Right ventricle myocardium inferior (tissue), 1 donor: ENCODE measurements at regions of chr5 and their contacts with region 1.

Region 1: DNA sequence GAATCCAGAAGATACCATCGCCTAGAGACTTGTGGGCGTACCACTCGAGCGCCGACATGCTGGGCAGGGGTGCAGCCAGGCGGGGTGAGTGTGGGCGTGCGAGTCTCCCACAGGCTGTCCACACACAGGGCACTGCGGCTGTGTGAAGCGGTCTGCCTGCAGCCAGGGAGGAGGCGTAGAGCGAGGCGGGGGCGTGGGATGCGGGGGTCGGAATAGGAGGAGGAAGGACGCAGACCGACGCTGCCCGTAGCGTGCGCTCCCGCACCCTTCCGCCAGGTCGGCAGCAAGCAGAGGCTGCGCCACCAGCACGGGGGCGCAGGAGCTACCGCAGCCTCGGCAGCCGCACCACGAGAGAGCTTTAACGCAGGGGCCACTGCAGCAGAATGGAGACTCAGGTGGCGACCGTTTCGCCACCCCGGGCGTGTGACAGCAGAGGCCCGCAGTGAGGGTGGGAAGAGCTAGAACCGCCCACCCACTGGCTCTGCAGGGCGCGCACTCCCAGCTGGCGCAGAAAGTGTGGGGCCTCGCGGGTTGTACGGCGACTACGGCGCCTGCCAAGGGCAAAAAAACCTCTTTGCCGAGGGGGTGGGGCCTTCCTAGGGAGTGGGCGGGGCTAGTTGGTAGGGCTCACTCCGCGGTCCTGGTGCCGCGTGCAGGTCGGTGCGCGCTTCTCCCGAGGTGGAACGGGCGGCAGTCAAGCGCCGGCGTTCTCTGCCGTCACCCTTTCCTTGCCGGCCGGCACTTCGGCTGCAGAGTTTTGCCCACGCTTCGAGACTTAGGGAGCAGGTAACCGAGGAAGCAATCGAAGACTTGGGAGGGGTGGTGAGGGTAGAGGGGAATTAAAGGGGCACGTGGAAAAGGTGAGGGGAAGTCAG is at the starts of genes MBLAC2 and POLR3G:
- DNase-seq: peak; percentile 94
- ATAC-seq: peak; percentile 98
- total RNA-seq, gene MBLAC2: 4.0 TPM
- total RNA-seq, gene POLR3G: 0.68 TPM

Region 2: DNA sequence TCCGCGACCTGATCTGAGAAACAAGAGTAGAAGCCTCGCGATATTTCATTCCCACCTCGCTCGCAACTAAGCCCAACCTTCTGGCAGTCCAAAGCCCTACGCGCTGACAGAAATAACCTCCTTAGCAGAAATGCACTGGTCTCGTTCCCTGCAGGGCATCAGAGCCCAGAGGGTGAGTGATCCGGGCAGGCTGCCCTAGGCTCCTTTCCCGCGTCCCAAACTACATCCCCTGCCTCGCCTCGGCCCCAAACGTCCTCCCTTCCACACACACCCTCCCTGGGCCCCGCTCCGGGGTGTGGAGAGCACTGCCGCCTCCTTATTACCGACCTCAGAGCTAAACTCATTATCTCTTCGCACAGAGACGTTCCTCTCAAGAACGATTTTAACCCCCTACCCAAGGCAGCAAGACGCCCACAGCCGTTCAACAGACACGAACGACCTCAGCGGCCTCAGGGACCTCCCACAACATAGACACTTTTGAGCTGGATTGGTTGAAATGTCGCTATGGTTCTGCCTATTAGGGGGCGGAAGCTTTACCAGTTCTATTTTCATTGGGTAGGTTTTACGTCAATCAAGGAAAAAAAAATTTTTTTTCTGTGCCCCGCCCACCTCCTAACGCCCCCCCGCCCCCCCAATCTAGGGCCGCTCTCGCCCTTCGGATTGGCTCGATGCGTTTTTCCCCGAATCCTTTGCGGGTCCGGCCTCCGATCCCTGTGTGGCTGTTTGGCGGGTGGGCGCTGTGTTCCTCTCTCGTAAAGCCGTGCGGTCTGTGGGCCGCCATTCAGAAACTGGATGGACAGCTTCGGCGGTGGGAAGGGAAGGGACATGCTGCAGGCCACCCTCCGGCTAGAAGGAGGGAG is 64.9 kb before region 1 on chr5 and contains the start of gene CETN3:
- intact Hi-C with region 1: loop called (anchors 2 kb)
- DNase-seq: peak; percentile 96
- ATAC-seq: peak; percentile 99
- total RNA-seq, gene CETN3: 27.9 TPM

Region 3: GRCh38 chr5:90606539-90606938 is 132.1 kb after region 1 on chr5:
- intact Hi-C with region 1: no loop called
- DNase-seq: no peak
- ATAC-seq: no peak